ENCODE measurements at regions of chr10 and their contacts with region 1.

Region 1: GRCh38 chr10:96772194-96772593 is 51.9 kb upstream of the PIK3AP1 start:
- DNase-seq: no peak
- H3K4me3 ChIP-seq: no peak overlapping the region
- H3K27ac ChIP-seq: no peak overlapping the region
- H3K4me1 ChIP-seq: no peaks in the 10 kb centered on the region
- H3K27me3 ChIP-seq: no peaks in the 10 kb centered on the region
- CTCF ChIP-seq: no peak
- POLR2A ChIP-seq: no peak

Region 2: DNA sequence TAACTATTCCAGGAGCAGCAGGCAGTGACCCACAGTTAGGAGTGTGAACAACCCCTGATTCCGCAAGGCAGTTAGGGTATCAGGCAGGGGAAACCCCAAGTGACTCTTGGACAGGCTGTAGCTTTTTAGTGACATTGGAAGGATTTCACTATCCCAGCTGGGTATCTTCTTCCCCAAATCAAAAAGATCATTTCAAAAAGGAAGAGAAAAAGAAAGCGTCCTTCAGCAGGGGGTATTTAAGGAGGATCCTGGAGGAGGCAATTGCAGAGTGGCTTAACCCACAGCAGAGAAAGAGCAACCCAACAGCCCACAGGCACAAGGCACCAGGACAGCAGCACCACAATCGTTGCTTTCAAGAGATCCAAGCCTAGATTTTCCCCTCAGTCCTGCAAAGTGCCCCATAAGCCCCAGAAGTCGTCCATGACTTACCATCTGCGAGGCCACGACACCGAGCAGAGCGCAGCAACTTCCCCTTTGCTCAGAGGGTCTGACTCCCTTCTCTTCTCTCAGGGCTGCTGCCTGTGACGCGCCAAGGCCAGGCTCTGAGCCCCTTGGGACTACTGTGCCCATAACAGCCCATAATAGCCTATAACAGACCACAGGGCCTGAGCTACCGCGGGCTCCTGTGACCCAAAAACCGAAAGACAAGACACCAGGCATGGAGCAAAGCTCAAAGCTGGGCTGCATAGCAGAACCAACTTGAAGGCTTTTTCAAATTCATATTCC is 71.7 kb before region 1 on chr10:
- intact Hi-C with region 1: no loop called
- DNase-seq: no peak
- H3K4me3 ChIP-seq: no peak overlapping the region
- H3K27ac ChIP-seq: no peak overlapping the region
- H3K4me1 ChIP-seq: no peaks in the 10 kb centered on the region
- H3K27me3 ChIP-seq: no peaks in the 10 kb centered on the region
- CTCF ChIP-seq: no peak
- POLR2A ChIP-seq: no peak

Region 3: GRCh38 chr10:96826438-96826837 is 54.2 kb after region 1 on chr10:
- intact Hi-C with region 1: loop called (anchors 5 kb)
- DNase-seq: no peak
- H3K4me3 ChIP-seq: no peak overlapping the region
- H3K27ac ChIP-seq: no peak overlapping the region
- H3K4me1 ChIP-seq: no peaks in the 10 kb centered on the region
- H3K27me3 ChIP-seq: no peaks in the 10 kb centered on the region
- CTCF ChIP-seq: no peak
- POLR2A ChIP-seq: no peak